Posterior vena cava (tissue), 2 donors: ENCODE measurements at regions of chr2 and their contacts with region 1.

Region 1: GRCh38 chr2:227915145-227915544 is 43.7 kb downstream of the DAW1 start:
- DNase-seq: no peak

Region 2: DNA sequence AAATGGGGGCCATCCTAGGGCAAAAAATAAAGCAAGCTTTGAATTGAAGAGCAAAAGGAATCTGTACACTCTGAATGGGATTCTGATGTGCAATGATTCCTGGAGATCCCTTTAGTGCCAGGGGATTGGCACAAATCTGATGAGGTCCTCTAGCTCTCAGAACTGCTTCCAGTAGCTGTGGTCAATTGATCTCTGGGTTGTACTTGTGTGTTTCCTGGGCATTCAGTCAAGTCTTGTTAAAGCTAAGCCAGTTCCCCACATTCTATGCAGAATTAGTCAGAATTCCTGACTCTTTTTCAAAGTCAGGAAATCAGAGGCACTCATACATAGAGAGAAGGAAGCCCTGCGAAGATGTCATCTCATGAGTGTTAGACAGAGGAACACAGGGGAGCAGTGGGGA is 1637.9 kb after region 1 on chr2:
- intact Hi-C with region 1: loop called in 1 of 2 experiments (anchors 5 kb)
- DNase-seq: no peak